B cell (primary cell): ENCODE measurements at regions of chr19 and their contacts with region 1.

Region 1: GRCh38 chr19:37334179-37335071 is 36.5 kb upstream of the ZNF527 start:
- DNase-seq: peak; percentile 92
- ATAC-seq: peak; percentile 95
- H3K4me3 ChIP-seq: peak overlapping the region; percentile 59 to 86 (median 83)
- H3K4me3 Mint-ChIP-seq: peak overlapping the region; percentile 92
- H3K27ac ChIP-seq: peak overlapping the region; percentile 62 to 85
- H3K27ac Mint-ChIP-seq: peak overlapping the region; percentile 83
- H3K4me1 ChIP-seq: peaks cover 11 to 16% of the 10 kb centered on the region in 2 donors
- H3K4me1 Mint-ChIP-seq: peaks cover 21% of the 10 kb centered on the region
- H3K27me3 ChIP-seq: no peaks in the 10 kb centered on the region
- H3K27me3 Mint-ChIP-seq: no peaks in the 10 kb centered on the region
- CTCF ChIP-seq: no peak

Region 2: GRCh38 chr19:36331353-36332228 is 1002.8 kb before region 1 on chr19:
- CTCF ChIA-PET with region 1: no interaction called
- POLR2A ChIA-PET with region 1: no interaction called
- intact Hi-C with region 1: loop called (anchors 5 kb)
- DNase-seq: peak; percentile 94
- ATAC-seq: peak; percentile 97
- H3K4me3 ChIP-seq: peak overlapping the region; percentile 55 to 76 (median 75)
- H3K4me3 Mint-ChIP-seq: peak overlapping the region; percentile 89
- H3K27ac ChIP-seq: peak overlapping the region; percentile 14 to 60
- H3K27ac Mint-ChIP-seq: peak overlapping the region; percentile 87
- H3K4me1 ChIP-seq: peaks cover 15 to 17% of the 10 kb centered on the region in 2 donors
- H3K4me1 Mint-ChIP-seq: peaks cover 24% of the 10 kb centered on the region
- H3K27me3 ChIP-seq: no peaks in the 10 kb centered on the region
- H3K27me3 Mint-ChIP-seq: no peaks in the 10 kb centered on the region
- CTCF ChIP-seq: no peak

Region 3: DNA sequence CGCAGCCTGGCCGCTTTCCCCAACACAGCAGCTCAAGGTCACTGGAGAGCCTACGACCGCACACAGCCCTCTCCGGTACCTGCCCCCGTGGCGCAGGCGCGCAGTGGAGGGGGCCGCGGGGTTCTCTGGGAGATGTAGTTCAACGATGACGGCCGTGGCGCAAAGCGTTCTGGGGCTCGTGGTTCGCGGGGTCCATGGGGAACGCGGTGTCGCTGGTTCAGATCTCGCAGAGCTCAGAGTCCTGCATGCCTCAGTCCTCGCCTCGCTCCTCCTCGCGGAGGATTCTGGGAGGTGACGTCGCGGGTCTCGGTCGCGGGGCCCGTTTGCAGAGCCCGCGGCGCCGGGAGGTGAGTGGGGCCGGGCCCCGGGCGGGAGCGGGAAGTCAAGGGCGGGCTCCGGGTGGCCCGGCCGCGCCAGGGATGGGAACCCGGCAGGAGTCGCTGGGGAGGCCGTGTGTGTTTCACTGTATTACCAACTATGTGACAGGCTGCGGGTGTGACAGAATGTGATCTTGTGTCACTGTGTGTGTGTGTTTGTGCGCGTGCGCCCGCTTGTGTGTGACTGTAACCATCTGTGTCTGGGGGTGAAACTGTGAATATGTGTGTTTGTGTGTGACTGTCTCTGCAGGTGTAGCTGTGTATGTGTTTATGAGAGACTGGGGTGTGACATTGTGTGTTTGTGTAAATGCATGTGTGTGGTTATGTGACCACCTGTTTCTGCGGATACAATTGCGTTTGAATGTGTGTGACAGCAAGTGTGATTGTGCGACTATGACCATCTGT is 36.6 kb after region 1 on chr19 and contains the start of gene ZNF527:
- CTCF ChIA-PET with region 1: interaction called, 4 read pairs
- POLR2A ChIA-PET with region 1: interaction called, 4 read pairs
- intact Hi-C with region 1: loop called (anchors 1 kb)
- DNase-seq: peak; percentile 98
- ATAC-seq: peak; percentile 96
- H3K4me3 ChIP-seq: peak within 1 kb of the TSS; percentile 59 to 87 (median 79)
- H3K4me3 Mint-ChIP-seq: peak within 1 kb of the TSS; percentile 99
- H3K27ac ChIP-seq: peak within 1 kb of the TSS; percentile 73 to 87
- H3K27ac Mint-ChIP-seq: peak within 1 kb of the TSS; percentile 98
- H3K4me1 ChIP-seq: peaks cover 5 to 14% of the 10 kb centered on the region in 2 donors
- H3K4me1 Mint-ChIP-seq: peaks cover 12% of the 10 kb centered on the region
- H3K27me3 ChIP-seq: no peaks in the 10 kb centered on the region
- H3K27me3 Mint-ChIP-seq: no peaks in the 10 kb centered on the region
- CTCF ChIP-seq: peak; percentile 12
- total RNA-seq, gene ZNF527: 9.0 and 11.4 TPM in 2 replicates